Mammary epithelial cell (primary cell): ENCODE measurements at regions of chr12 and their contacts with region 1.

Region 1: GRCh38 chr12:64431791-64432190 is 20.1 kb upstream of the TBK1 start:
- DNase-seq: no peak
- H3K4me3 ChIP-seq: no peak overlapping the region
- H3K27ac ChIP-seq: no peak overlapping the region
- H3K4me1 ChIP-seq: no peaks in the 10 kb centered on the region
- H3K27me3 ChIP-seq: no peaks in the 10 kb centered on the region
- CTCF ChIP-seq: no peak

Region 2: DNA sequence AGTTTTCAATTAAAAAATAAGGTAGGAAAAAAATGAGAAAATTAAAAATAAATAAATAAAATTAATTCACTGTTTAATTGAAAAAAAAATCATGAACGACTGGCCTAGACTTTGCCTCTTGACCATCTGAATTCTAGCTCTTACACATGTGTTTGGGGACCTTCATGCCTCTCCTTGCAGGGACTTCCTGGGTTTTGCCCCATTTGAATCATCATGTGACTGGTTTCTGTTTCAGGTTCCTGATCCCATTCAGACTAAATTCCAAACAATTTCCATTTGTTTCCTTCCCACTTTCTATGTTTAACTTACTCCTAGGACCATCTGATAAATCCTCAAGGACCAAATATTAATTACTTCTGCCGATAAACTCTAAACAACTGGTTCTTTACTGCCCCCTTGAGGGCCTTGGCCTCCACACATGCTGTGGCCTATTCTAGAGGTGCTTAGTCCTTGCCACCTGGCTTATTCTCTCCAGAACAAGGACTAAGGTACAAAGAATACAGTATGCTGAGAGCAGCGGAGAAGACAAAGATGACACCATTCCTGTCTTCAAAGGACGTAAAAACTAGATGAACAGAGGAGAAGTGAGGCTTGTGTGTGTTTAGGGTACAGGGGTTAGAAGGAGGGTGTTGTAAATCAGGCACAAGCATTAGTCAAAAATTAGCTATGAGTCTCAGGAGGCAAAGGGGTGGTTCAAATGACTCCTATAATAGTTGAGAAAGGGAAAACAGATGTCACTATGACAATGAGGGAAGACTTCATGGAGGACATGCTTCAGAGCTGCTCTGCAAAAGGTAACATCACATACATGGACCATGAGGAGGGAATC is 1155.0 kb before region 1 on chr12:
- CTCF ChIA-PET with region 1: no interaction called
- dilution Hi-C with region 1: no loop called
- in situ Hi-C with region 1: no loop called
- intact Hi-C with region 1: no loop called
- DNase-seq: peak; percentile 37
- H3K4me3 ChIP-seq: no peak overlapping the region
- H3K27ac ChIP-seq: no peak overlapping the region
- H3K4me1 ChIP-seq: no peaks in the 10 kb centered on the region
- H3K27me3 ChIP-seq: no peaks in the 10 kb centered on the region
- CTCF ChIP-seq: peak; percentile 89 to 91

Region 3: DNA sequence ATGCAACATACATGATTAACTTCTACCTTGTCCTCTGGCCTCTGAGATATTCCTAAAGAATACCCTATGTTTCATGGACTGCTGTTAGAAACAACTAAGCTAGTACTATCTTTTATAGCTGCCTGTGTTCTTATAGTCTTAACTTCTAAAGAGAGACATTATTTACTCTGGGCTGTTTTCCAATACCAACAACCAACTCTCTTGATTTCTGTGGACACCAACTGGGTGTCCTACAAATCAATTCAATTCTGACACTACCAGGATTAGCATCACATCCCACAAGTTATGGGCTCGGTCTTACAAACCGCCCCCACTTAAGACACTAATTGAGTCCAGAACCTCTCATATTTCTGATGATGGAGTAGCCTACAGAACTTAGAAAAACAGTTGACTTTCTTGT is 19.3 kb before region 1 on chr12:
- CTCF ChIA-PET with region 1: no interaction called
- dilution Hi-C with region 1: no loop called
- in situ Hi-C with region 1: no loop called
- intact Hi-C with region 1: loop called (anchors 2 kb)
- DNase-seq: no peak
- H3K4me3 ChIP-seq: no peak overlapping the region
- H3K27ac ChIP-seq: no peak overlapping the region
- H3K4me1 ChIP-seq: no peaks in the 10 kb centered on the region
- H3K27me3 ChIP-seq: no peaks in the 10 kb centered on the region
- CTCF ChIP-seq: no peak

Region 4: GRCh38 chr12:64445490-64445889 is 13.7 kb after region 1 on chr12:
- CTCF ChIA-PET with region 1: no interaction called
- dilution Hi-C with region 1: no loop called
- in situ Hi-C with region 1: no loop called
- intact Hi-C with region 1: loop called (anchors 2 kb)
- DNase-seq: no peak
- H3K4me3 ChIP-seq: no peak overlapping the region
- H3K27ac ChIP-seq: no peak overlapping the region
- H3K4me1 ChIP-seq: peaks cover 3% of the 10 kb centered on the region
- H3K27me3 ChIP-seq: no peaks in the 10 kb centered on the region
- CTCF ChIP-seq: no peak

Region 5: DNA sequence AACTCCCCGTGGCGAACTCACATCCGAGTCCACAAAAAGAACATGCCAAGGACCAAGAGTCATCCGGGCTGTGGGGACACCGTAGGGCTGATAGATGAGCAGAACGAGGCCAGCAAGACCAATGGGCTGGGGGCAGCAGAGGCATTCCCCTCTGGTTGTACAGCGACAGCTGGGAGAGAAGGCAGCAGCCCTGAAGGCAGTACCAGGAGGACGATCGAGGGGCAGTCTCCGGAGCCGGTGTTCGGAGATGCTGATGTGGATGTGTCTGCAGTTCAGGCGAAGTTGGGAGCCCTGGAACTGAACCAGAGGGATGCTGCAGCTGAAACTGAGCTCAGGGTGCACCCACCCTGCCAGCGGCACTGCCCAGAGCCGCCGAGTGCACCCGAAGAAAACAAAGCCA is 443.4 kb after region 1 on chr12:
- CTCF ChIA-PET with region 1: no interaction called
- dilution Hi-C with region 1: no loop called
- in situ Hi-C with region 1: no loop called
- intact Hi-C with region 1: no loop called
- DNase-seq: no peak
- H3K4me3 ChIP-seq: no peak overlapping the region
- H3K27ac ChIP-seq: no peak overlapping the region
- H3K4me1 ChIP-seq: no peaks in the 10 kb centered on the region
- H3K27me3 ChIP-seq: peaks cover 7% of the 10 kb centered on the region
- CTCF ChIP-seq: no peak